MCF 10A (cell line): ENCODE measurements at regions of chr19 and their contacts with region 1.

Region 1: GRCh38 chr19:53103198-53103944 is at the start of gene ZNF160:
- DNase-seq: peak; percentile 95
- H3K4me3 Mint-ChIP-seq: peak within 1 kb of the TSS; percentile 81
- H3K27ac Mint-ChIP-seq: peak within 1 kb of the TSS; percentile 84
- H3K4me1 Mint-ChIP-seq: peaks cover 13% of the 10 kb centered on the region
- H3K27me3 Mint-ChIP-seq: no peaks in the 10 kb centered on the region
- CTCF ChIP-seq: no peak
- total RNA-seq, gene ZNF160: 16.5 and 20.3 TPM in 2 replicates

Region 2: DNA sequence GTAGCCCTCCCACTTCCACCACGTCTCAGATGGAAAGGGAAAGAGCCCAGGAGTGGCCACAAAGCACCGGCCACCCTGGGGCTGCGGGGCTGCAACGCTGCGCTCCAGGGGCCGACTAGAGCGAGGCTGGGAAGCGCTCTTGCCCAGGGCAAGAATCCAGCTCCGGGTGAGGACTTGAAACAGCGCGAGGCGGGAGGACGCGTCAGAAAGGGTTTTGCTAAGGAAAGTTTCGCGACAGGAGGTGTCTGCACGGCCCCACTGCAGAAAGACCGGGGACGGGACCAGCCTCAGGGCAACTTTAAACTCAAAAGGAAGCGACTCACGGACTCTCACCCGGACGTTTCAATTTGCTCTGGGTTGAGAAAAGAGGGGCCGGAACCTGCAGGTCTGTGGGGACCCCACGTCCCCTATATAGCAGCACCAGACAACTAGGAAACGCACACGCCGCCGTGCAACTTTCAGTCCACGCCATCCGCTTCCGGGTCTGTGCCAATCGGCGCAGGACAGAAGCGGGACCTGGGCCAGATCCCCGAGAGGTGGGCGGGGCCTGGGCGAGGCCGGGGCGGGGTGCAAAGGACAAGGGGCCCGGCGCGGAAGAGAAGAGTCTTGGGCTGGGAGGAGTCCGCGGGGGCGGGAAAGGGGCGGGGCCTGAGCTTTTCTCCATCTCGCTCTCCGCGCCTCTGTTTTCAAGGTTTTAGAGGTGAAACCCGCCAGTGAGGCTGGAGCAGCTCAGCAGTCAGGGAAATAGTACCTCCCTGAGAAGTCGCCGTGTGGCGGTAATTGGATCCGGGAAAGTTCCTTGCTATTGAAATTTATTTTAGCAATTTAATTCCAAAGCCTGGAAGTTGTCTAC is 140.8 kb before region 1 on chr19 and contains the start of gene ZNF816:
- CTCF ChIA-PET with region 1: no interaction called
- POLR2A ChIA-PET with region 1: interaction called, 5 read pairs
- intact Hi-C with region 1: loop called (anchors 5 kb)
- DNase-seq: peak; percentile 95
- H3K4me3 Mint-ChIP-seq: peak within 1 kb of the TSS; percentile 95
- H3K27ac Mint-ChIP-seq: peak within 1 kb of the TSS; percentile 87
- H3K4me1 Mint-ChIP-seq: no peaks in the 10 kb centered on the region
- H3K27me3 Mint-ChIP-seq: no peaks in the 10 kb centered on the region
- CTCF ChIP-seq: no peak
- total RNA-seq, gene ZNF816: 5.4 and 5.5 TPM in 2 replicates

Region 3: DNA sequence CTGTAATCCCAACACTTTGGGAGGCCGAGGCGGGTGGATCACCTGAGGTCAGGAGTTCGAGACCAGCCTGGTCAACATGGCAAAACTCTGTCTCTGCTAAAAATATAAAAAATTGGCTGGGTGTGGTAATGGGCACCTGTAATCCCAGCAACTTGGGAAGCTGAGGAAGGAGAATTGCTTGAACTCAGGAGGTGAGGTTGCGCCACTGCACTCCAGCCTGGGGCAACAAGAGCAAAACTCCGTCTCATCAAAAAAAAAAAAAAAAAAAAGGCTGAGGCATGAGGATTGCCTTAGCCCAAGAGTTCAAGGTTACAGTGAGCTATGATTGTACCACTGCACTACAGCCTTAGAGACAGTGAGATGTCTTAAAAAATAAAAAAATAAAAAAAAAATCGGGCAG is 32.1 kb before region 1 on chr19:
- CTCF ChIA-PET with region 1: no interaction called
- POLR2A ChIA-PET with region 1: no interaction called
- intact Hi-C with region 1: no loop called
- DNase-seq: no peak
- H3K4me3 Mint-ChIP-seq: no peak overlapping the region
- H3K27ac Mint-ChIP-seq: no peak overlapping the region
- H3K4me1 Mint-ChIP-seq: no peaks in the 10 kb centered on the region
- H3K27me3 Mint-ChIP-seq: no peaks in the 10 kb centered on the region
- CTCF ChIP-seq: no peak